Aorta (tissue), 5 donors: ENCODE measurements at regions of chr11 and their contacts with region 1.

Region 1: GRCh38 chr11:97847730-97848129 is 1173.0 kb upstream of the CNTN5 start:
- DNase-seq: no peak
- ATAC-seq: no peak
- H3K4me3 ChIP-seq: no peak overlapping the region
- H3K27ac ChIP-seq: no peak overlapping the region
- H3K4me1 ChIP-seq: no peaks in the 10 kb centered on the region
- H3K27me3 ChIP-seq: no peaks in the 10 kb centered on the region

Region 2: GRCh38 chr11:96530473-96530872 is 1317.3 kb before region 1 on chr11:
- intact Hi-C with region 1: loop called in 1 of 2 experiments (anchors 5 kb)
- DNase-seq: no peak
- ATAC-seq: no peak
- H3K4me3 ChIP-seq: no peak overlapping the region
- H3K27ac ChIP-seq: no peak overlapping the region
- H3K4me1 ChIP-seq: no peaks in the 10 kb centered on the region
- H3K27me3 ChIP-seq: no peaks in the 10 kb centered on the region